ENCODE measurements at regions of chr12 and their contacts with region 1.

Region 1: GRCh38 chr12:49088190-49088931 is 6.2 kb downstream of the DHH start:
- DNase-seq: peak; percentile 55
- ATAC-seq: peak; percentile 85
- H3K4me3 ChIP-seq: peak overlapping the region; percentile 13 to 37
- H3K27ac ChIP-seq: 0 out of 2 replicates have a peak overlapping the region, but pooled peaks have one; percentile 57
- H3K4me1 ChIP-seq: peaks cover 31% of the 10 kb centered on the region
- H3K27me3 ChIP-seq: no peaks in the 10 kb centered on the region
- CTCF ChIP-seq: peak; percentile 94

Region 2: GRCh38 chr12:49069507-49070346 is 18.6 kb before region 1 on chr12 and contains the start of gene RHEBL1:
- CTCF ChIA-PET with region 1: interaction called, 10 read pairs
- POLR2A ChIA-PET with region 1: no interaction called
- in situ Hi-C with region 1: no loop called
- intact Hi-C with region 1: no loop called
- DNase-seq: peak; percentile 86
- ATAC-seq: peak; percentile 100
- H3K4me3 ChIP-seq: peak within 1 kb of the TSS; percentile 71 to 97
- H3K27ac ChIP-seq: peak within 1 kb of the TSS; percentile 90
- H3K4me1 ChIP-seq: peaks cover 8% of the 10 kb centered on the region
- H3K27me3 ChIP-seq: no peaks in the 10 kb centered on the region
- CTCF ChIP-seq: no peak
- total RNA-seq, gene RHEBL1: 4.7 TPM